ENCODE measurements at regions of chr15 and their contacts with region 1.

Region 1: GRCh38 chr15:91852741-91853510 is 582 bp upstream of the SLCO3A1 start:
- DNase-seq: peak; percentile 82
- ATAC-seq: peak; percentile 68
- H3K4me3 Mint-ChIP-seq: peak overlapping the region; percentile 74
- H3K27ac Mint-ChIP-seq: peak overlapping the region; percentile 88
- H3K4me1 Mint-ChIP-seq: peaks cover 55% of the 10 kb centered on the region
- H3K27me3 Mint-ChIP-seq: peaks cover 3% of the 10 kb centered on the region

Region 2: GRCh38 chr15:91302588-91303439 is 550.1 kb before region 1 on chr15:
- CTCF ChIA-PET with region 1: no interaction called
- POLR2A ChIA-PET with region 1: no interaction called
- intact Hi-C with region 1: loop called (anchors 1 to 2 kb)
- DNase-seq: peak; percentile 29
- ATAC-seq: peak; percentile 60
- H3K4me3 Mint-ChIP-seq: no peak overlapping the region
- H3K27ac Mint-ChIP-seq: no peak overlapping the region
- H3K4me1 Mint-ChIP-seq: peaks cover 8% of the 10 kb centered on the region
- H3K27me3 Mint-ChIP-seq: peaks cover 6% of the 10 kb centered on the region

Region 3: DNA sequence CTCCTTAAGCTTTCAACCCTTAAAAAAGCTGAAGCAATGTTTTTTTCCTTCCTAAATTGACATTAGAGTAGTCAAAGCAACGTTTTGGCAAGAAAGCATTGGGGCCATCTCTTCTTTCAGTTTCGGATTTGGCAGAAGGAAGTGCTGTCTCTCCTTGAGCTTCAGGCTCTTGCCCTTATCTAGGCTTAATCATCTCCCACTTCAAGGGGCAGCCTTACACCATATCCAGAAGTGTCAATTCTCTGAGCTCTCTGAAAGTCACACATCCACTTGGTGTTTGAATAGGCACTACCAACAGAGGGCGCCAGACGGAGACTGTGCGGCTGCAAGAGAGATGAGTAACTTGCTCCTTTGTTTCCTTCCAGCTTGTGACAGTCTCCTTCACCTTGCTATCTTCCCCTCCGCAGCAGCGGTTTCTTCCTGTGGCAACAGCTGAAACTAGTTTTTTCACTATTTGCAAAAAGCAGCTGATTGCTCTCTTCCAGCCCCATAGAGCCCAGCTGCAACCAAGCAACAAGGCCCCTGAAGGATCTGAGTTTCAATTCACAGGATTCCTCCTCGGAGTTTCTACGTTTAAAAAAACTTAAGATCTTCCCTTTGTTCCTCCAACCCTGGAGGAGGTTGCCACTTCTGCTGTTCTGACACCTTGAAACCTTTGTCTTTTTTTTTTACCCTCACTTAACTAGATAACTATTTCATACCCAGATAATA is 146.4 kb before region 1 on chr15:
- CTCF ChIA-PET with region 1: interaction called, 36 read pairs
- POLR2A ChIA-PET with region 1: no interaction called
- intact Hi-C with region 1: loop called (anchors 1 kb)
- DNase-seq: peak; percentile 93
- ATAC-seq: peak; percentile 99
- H3K4me3 Mint-ChIP-seq: peak overlapping the region; percentile 9
- H3K27ac Mint-ChIP-seq: no peak overlapping the region
- H3K4me1 Mint-ChIP-seq: peaks cover 17% of the 10 kb centered on the region
- H3K27me3 Mint-ChIP-seq: peaks cover 12% of the 10 kb centered on the region

Region 4: DNA sequence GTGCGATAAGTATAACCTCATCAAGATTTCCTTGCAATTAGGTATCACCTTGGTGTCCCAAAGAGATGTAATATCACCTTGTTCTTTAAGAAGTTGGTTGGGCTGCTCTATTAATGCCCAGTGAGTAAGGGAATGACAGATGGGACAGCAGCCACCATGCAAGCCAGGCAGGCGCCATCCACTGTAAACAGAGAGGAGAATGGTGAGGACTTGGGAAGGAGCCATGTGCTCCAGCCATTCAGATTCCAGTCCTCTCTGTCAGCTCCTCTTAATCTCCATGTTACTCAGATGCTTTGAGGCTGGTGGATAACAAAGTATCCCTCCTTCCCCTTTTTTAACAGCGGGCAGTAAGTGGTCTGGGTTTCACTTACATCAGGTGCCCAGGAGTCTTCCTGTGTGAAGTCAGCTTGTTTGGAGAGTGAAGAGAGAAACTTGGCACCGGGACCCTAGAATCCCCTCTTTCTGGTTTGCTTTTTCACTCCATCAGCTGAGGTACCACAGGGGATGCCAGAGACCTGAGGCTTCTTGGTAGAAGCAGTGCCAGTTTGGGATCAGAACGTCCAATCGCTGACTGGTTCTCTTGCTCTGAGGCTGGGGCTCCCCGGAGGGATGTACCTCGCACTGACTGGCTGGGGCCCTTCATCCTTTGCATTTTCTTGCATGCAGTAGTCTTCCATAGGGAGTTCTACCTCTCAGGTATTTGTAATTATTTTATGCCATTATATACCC is 30.1 kb after region 1 on chr15:
- CTCF ChIA-PET with region 1: no interaction called
- POLR2A ChIA-PET with region 1: no interaction called
- intact Hi-C with region 1: no loop called
- DNase-seq: no peak
- ATAC-seq: no peak
- H3K4me3 Mint-ChIP-seq: no peak overlapping the region
- H3K27ac Mint-ChIP-seq: no peak overlapping the region
- H3K4me1 Mint-ChIP-seq: peaks cover 25% of the 10 kb centered on the region
- H3K27me3 Mint-ChIP-seq: no peaks in the 10 kb centered on the region

Region 5: DNA sequence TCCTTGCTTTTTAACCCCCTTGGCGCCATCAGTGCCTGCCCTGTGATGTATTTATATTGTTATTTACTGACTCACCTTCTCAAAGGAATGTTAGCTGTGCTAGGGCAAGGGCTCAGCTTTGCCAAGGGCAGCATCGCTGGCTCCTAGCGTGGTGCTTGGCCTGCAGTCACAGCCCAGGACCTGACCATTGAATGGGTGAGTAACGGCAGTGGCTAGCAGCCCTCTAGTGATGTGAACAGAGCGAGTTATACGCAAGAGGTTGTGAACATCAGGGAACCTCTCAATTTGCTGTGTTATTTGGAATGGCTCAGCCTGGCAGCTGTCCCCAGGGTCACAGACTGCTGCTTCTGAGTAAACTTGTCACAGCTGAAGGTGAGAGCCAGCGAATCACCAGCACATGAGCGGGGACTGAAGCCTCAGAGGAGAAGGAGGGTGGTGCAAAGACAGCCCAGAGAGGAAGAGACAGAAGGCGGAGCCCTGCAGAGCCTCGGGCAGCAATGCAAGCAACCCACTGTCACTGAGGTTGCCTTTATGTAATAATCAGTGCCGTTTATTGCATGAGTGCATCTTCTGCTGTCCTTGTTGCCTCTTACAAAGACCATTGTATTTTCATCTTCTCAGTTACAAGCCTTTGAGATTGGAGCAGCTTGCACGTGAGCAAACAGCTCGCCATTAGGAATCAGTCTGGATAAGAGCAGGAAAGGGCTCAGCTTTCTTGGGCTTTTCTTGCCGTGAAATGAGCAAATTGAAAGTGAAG is 158.9 kb after region 1 on chr15:
- CTCF ChIA-PET with region 1: no interaction called
- POLR2A ChIA-PET with region 1: no interaction called
- intact Hi-C with region 1: loop called (anchors 1 to 5 kb)
- DNase-seq: peak; percentile 69
- ATAC-seq: peak; percentile 88
- H3K4me3 Mint-ChIP-seq: peak overlapping the region; percentile 53
- H3K27ac Mint-ChIP-seq: peak overlapping the region; percentile 73
- H3K4me1 Mint-ChIP-seq: peaks cover 73% of the 10 kb centered on the region
- H3K27me3 Mint-ChIP-seq: no peaks in the 10 kb centered on the region

Region 6: GRCh38 chr15:92845126-92845508 is 992.2 kb after region 1 on chr15:
- CTCF ChIA-PET with region 1: no interaction called
- POLR2A ChIA-PET with region 1: no interaction called
- intact Hi-C with region 1: loop called in 1 of 2 experiments (anchors 10 kb)
- DNase-seq: no peak
- ATAC-seq: peak; percentile 43
- H3K4me3 Mint-ChIP-seq: peak overlapping the region; percentile 57
- H3K27ac Mint-ChIP-seq: peak overlapping the region; percentile 99
- H3K4me1 Mint-ChIP-seq: peaks cover 79% of the 10 kb centered on the region
- H3K27me3 Mint-ChIP-seq: no peaks in the 10 kb centered on the region

Region 7: GRCh38 chr15:93018580-93018979 is 1165.7 kb after region 1 on chr15:
- CTCF ChIA-PET with region 1: no interaction called
- POLR2A ChIA-PET with region 1: no interaction called
- intact Hi-C with region 1: loop called in 1 of 2 experiments (anchors 10 kb)
- DNase-seq: no peak
- ATAC-seq: no peak
- H3K4me3 Mint-ChIP-seq: no peak overlapping the region
- H3K27ac Mint-ChIP-seq: peak overlapping the region; percentile 80
- H3K4me1 Mint-ChIP-seq: peaks cover 71% of the 10 kb centered on the region
- H3K27me3 Mint-ChIP-seq: no peaks in the 10 kb centered on the region

Measured in activated CD4-positive, alpha-beta T cell treated with anti-CD3 and anti-CD28 coated beads for 36 hours (primary cell).